ENCODE measurements at regions of chr19 and their contacts with region 1.

Region 1: DNA sequence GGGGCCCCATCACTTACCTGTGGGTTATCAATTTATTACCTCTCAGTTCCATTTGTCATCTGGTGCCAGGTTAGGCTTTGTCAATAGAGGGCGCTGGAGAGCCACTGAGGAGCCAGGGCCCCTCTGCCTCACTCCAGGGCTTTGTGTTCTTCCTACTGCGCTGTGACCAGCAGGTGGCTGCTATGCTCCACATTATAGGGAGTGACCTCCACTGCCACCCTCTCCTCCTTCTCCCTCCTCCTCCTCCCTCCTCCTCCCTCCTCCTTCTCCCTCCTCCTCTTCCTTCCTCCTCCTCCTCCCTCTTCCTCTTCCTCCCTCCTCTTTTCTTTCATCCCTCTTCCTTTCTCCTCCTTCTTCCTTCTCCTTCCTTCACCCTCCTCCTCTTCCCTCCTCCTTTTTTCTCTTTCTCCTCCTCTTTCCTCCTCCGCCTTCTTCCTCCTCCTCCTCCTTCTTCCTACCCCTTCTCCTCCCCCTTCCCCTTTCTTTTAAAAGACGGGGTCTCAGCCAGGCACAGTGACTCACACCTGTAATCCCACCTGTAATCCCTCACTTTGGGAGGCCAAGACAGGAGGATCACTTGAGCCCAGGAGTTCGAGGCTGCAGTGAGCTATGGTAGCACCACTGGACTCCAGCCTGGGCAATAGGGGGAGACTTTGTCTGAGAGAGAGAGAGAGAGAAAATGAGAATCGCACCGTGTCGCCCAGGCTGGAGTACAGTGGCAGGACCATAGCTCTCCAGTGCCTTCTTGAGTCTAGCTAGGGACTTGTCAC is 10.3 kb upstream of the ZBTB32 start:
- DNase-seq: peak; percentile 82 to 91 (median 86)
- ATAC-seq: peak; percentile 98 to 100 (median 100)
- H3K4me3 ChIP-seq: no peak overlapping the region
- H3K27ac ChIP-seq: no peak overlapping the region
- H3K4me1 ChIP-seq: peaks cover 0 to 4% (median 0%) of the 10 kb centered on the region in 12 donors
- H3K27me3 ChIP-seq: no peaks in the 10 kb centered on the region
- CTCF ChIP-seq: peak; percentile 94 to 100 (median 96)
- POLR2A ChIP-seq: no peak

Region 2: DNA sequence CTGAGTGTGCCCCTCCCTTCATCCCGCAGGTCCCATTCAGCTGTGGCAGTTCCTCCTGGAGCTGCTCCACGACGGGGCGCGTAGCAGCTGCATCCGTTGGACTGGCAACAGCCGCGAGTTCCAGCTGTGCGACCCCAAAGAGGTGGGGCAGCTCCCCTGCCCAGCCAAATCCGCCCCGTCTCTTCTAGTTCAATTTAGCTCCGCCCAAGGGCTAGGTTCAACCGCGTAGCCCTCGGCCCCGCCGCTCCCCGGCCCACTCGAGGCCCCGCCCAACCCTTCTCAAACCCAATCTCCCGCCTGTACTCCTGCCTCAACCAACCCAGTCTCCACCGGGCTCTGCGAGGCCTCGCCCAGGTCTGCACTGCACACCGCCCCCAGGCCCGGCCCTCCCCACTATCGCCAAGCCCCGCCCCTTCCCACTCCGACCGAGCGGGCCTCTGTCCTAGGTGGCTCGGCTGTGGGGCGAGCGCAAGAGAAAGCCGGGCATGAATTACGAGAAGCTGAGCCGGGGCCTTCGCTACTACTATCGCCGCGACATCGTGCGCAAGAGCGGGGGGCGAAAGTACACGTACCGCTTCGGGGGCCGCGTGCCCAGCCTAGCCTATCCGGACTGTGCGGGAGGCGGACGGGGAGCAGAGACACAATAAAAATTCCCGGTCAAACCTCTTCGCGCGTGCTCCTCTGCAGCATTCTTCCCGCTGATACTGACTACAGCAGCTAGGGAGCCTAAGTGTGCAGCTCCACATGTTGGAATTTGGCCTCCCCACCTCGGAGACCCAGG is 49.6 kb before region 1 on chr19:
- intact Hi-C with region 1: no loop called
- DNase-seq: peak; percentile 94 to 98 (median 97)
- ATAC-seq: peak; percentile 82 to 90 (median 87)
- H3K4me3 ChIP-seq: peak overlapping the region; percentile 34 to 71 (median 62)
- H3K27ac ChIP-seq: peak overlapping the region in 11 of 12 donors; percentile 58 to 93 (median 79)
- H3K4me1 ChIP-seq: peaks cover 0 to 52% (median 22%) of the 10 kb centered on the region in 12 donors
- H3K27me3 ChIP-seq: no peaks in the 10 kb centered on the region
- CTCF ChIP-seq: peak in 2 of 12 donors; percentile 6 to 8
- POLR2A ChIP-seq: peak in 1 of 2 donors; percentile 51

Region 3: DNA sequence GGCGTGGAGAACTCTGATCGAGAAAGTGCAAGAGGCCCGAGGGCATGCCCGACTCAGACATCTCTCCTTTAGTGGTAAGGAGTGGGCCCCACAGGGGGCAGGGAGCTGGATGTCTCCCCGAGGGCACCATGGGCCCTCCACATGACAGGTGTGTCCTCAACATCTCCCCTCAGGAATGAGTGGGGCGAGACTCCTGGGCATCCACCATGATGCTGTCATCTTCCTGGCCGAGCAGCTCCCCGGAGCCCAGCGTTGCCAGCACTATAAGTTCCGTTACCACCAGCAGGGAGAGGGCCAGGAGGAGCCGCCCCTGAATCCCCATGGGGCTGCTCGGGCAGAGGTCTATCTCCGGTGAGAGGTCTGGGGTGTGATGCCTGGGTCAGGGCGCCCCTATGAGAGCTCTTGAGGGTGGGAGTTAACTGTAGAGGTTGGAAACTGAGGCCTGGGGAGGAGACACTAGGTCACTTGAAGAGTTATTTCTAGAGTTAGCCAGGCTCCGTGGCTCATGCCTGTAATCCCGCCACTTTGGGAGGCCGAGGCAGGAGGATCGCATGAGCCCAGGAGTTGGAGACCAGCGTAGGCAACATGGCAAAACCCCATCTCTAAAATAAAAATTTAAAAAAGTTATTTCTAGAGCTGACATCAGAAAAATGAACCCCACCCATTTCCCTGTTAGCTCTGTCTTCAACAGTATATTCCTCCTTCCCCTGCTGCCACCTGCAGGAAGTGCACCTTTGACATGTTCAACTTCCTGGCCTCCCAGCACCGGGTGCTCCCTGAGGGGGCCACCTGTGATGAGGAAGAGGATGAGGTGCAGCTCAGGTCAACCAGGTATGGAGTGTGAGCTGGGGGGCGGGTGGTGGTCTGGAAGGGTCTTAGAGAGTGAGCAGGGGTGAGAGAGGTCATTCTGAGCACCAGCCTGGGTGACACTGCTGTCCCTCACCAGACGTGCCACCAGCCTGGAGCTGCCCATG is 43.2 kb after region 1 on chr19:
- intact Hi-C with region 1: no loop called
- DNase-seq: no peak
- ATAC-seq: no peak
- H3K4me3 ChIP-seq: no peak overlapping the region
- H3K27ac ChIP-seq: no peak overlapping the region
- H3K4me1 ChIP-seq: peaks cover 3 to 30% (median 14%) of the 10 kb centered on the region in 12 donors
- H3K27me3 ChIP-seq: no peaks in the 10 kb centered on the region
- CTCF ChIP-seq: no peak
- POLR2A ChIP-seq: no peak

Region 4: GRCh38 chr19:35812220-35813042 is 118.4 kb after region 1 on chr19 and contains the start of gene PRODH2:
- intact Hi-C with region 1: no loop called
- DNase-seq: no peak
- ATAC-seq: no peak
- H3K4me3 ChIP-seq: no peak within 1 kb of the TSS
- H3K27ac ChIP-seq: no peak within 1 kb of the TSS
- H3K4me1 ChIP-seq: no peaks in the 10 kb centered on the region
- H3K27me3 ChIP-seq: peaks cover 0 to 43% (median 0%) of the 10 kb centered on the region in 9 donors
- CTCF ChIP-seq: no peak
- POLR2A ChIP-seq: no peak
- total RNA-seq, gene PRODH2: not detected

Region 5: DNA sequence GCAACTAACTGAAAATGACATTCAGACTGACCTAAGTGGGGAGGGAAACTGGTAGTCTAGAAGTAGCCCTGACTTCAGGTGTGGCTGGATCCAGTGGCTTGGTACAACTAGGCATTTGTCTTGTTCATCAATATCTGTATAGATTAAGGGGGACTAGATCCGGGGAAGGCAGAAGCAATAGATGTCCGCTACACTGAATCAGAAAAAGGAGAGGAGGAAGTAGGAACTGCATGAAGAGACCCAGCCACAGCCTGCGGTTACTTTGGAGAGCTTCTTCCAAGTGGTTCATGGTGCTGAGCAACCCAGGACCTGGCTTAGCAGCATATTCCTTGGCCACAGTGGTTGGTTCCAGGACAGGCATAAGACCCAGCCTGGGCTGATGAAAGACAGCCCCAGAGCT is 128.6 kb after region 1 on chr19:
- intact Hi-C with region 1: loop called in 4 of 10 experiments (anchors 1 to 10 kb)
- DNase-seq: no peak
- ATAC-seq: no peak
- H3K4me3 ChIP-seq: no peak overlapping the region
- H3K27ac ChIP-seq: no peak overlapping the region
- H3K4me1 ChIP-seq: no peaks in the 10 kb centered on the region
- H3K27me3 ChIP-seq: peaks cover 0 to 45% (median 5%) of the 10 kb centered on the region in 9 donors
- CTCF ChIP-seq: no peak
- POLR2A ChIP-seq: no peak

Region 6: DNA sequence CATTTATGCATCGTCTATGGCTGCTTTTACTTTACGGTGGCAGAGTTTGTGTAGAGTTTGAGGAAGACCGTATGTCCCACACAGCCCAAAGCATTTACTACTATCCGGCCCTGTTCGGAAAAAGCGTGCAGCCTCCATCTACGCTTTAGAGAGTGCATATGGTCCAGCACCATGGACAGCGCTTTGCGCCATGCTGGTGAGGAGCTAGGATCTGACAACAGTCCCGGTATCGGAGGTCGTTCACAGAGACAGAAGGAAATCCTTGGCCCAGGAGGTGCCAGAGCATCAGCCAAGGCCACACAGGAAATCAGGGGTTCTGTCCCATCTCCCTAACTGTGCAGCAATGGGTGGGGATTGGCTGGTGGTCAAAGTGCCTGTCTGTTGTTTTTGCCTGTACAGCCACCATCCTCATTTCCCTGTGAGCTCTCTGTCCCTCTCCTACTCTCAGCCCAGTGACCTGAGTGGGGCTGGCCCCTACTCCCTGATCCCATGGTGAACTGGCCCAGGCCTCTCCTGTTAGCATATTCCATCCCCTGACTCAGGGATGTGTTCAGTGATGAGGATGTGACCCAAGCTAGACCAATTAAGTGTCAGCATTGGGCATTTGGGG is 134.8 kb after region 1 on chr19:
- intact Hi-C with region 1: loop called in 2 of 10 experiments (anchors 5 to 10 kb)
- DNase-seq: peak; percentile 39 to 80 (median 61)
- ATAC-seq: peak; percentile 69 to 75 (median 73)
- H3K4me3 ChIP-seq: no peak overlapping the region
- H3K27ac ChIP-seq: no peak overlapping the region
- H3K4me1 ChIP-seq: no peaks in the 10 kb centered on the region
- H3K27me3 ChIP-seq: peaks cover 0 to 30% (median 5%) of the 10 kb centered on the region in 9 donors
- CTCF ChIP-seq: no peak
- POLR2A ChIP-seq: no peak

Region 7: GRCh38 chr19:36032251-36033104 is 338.5 kb after region 1 on chr19 and contains the start of gene CLIP3:
- intact Hi-C with region 1: no loop called
- DNase-seq: peak; percentile 72 to 87 (median 74)
- ATAC-seq: peak; percentile 70 to 87 (median 80)
- H3K4me3 ChIP-seq: peak within 1 kb of the TSS; percentile 34 to 66 (median 56)
- H3K27ac ChIP-seq: peak within 1 kb of the TSS in 6 of 12 donors; percentile 22 to 85 (median 50)
- H3K4me1 ChIP-seq: peaks cover 0 to 15% (median 2%) of the 10 kb centered on the region in 12 donors
- H3K27me3 ChIP-seq: peaks cover 0 to 9% (median 0%) of the 10 kb centered on the region in 9 donors
- CTCF ChIP-seq: peak in 1 of 12 donors; percentile 23
- POLR2A ChIP-seq: no peak
- total RNA-seq, gene CLIP3: 2.2 to 8.0 (median 4.3) TPM